ENCODE measurements at regions of chr3 and their contacts with region 1.

Region 1: GRCh38 chr3:188881954-188882641 is 289.7 kb upstream of the TPRG1 start:
- DNase-seq: peak; percentile 70
- H3K4me3 ChIP-seq: no peak overlapping the region
- H3K27ac ChIP-seq: peak overlapping the region; percentile 74
- H3K4me1 ChIP-seq: peaks cover 37% of the 10 kb centered on the region
- H3K27me3 ChIP-seq: no peaks in the 10 kb centered on the region
- CTCF ChIP-seq: no peak
- POLR2A ChIP-seq: no peak

Region 2: GRCh38 chr3:188734429-188734861 is 147.7 kb before region 1 on chr3:
- CTCF ChIA-PET with region 1: no interaction called
- POLR2A ChIA-PET with region 1: no interaction called
- dilution Hi-C with region 1: no loop called
- intact Hi-C with region 1: no loop called
- DNase-seq: peak; percentile 25
- H3K4me3 ChIP-seq: no peak overlapping the region
- H3K27ac ChIP-seq: no peak overlapping the region
- H3K4me1 ChIP-seq: no peaks in the 10 kb centered on the region
- H3K27me3 ChIP-seq: no peaks in the 10 kb centered on the region
- CTCF ChIP-seq: no peak
- POLR2A ChIP-seq: no peak

Region 3: GRCh38 chr3:188788621-188789081 is 93.4 kb before region 1 on chr3:
- CTCF ChIA-PET with region 1: no interaction called
- POLR2A ChIA-PET with region 1: no interaction called
- dilution Hi-C with region 1: no loop called
- intact Hi-C with region 1: loop called (anchors 5 kb)
- DNase-seq: peak; percentile 90
- H3K4me3 ChIP-seq: no peak overlapping the region
- H3K27ac ChIP-seq: peak overlapping the region; percentile 85
- H3K4me1 ChIP-seq: peaks cover 19% of the 10 kb centered on the region
- H3K27me3 ChIP-seq: no peaks in the 10 kb centered on the region
- CTCF ChIP-seq: no peak
- POLR2A ChIP-seq: no peak

Region 4: DNA sequence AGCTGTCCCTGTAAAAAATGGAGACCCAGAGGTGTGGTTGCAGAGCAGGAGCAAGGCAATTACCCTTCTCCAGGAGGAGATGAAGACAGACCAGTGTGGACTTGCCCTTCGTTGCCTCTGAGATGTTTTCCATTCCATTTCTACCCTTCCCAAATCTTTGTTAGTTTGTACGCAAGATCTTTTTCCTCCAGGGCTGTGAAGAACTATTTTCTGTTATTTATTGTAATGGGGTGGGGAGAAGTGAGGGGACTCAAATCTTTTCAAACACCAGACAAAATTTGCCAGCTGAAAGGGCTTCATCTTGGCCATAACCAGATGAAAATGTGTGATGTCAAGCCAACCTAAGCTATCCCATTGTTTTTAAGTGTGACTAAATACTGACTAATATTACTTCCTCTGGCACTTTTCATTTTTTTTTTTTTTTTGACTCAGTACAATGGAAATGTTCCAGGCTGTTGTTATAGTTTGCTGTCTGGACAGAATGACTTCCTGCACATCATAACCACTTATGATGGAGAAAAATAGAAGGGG is 18.4 kb after region 1 on chr3:
- CTCF ChIA-PET with region 1: interaction called, 3 read pairs
- POLR2A ChIA-PET with region 1: interaction called, 3 read pairs
- dilution Hi-C with region 1: no loop called
- intact Hi-C with region 1: loop called (anchors 1 kb)
- DNase-seq: peak; percentile 94
- H3K4me3 ChIP-seq: peak overlapping the region in 1 of 3 experiments; percentile 35
- H3K27ac ChIP-seq: peak overlapping the region; percentile 100
- H3K4me1 ChIP-seq: peaks cover 37% of the 10 kb centered on the region
- H3K27me3 ChIP-seq: no peaks in the 10 kb centered on the region
- CTCF ChIP-seq: no peak
- POLR2A ChIP-seq: no peak

Region 5: DNA sequence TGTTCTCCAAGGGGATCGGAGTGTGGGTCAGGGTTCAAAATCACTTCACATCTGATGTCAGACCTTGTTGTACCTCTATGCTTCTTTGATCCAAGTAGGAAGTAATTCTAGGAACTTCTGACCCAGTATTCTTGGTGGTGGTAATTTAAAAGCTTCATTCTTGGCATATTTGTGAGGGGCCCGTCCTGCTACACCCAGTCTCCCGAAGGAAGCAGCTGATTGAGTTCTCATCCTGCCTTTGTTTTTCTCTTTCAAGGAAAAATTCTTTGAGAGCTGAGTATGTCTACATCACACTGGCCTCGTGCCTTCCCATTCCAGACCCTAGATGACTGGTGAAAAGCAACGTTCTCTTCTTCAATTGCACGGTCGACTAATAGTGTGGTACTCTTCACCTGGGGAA is 55.3 kb after region 1 on chr3:
- CTCF ChIA-PET with region 1: interaction called, 4 read pairs
- POLR2A ChIA-PET with region 1: no interaction called
- dilution Hi-C with region 1: no loop called
- intact Hi-C with region 1: loop called (anchors 1 kb)
- DNase-seq: peak; percentile 90
- H3K4me3 ChIP-seq: no peak overlapping the region
- H3K27ac ChIP-seq: no peak overlapping the region
- H3K4me1 ChIP-seq: peaks cover 18% of the 10 kb centered on the region
- H3K27me3 ChIP-seq: no peaks in the 10 kb centered on the region
- CTCF ChIP-seq: no peak
- POLR2A ChIP-seq: no peak

Region 6: DNA sequence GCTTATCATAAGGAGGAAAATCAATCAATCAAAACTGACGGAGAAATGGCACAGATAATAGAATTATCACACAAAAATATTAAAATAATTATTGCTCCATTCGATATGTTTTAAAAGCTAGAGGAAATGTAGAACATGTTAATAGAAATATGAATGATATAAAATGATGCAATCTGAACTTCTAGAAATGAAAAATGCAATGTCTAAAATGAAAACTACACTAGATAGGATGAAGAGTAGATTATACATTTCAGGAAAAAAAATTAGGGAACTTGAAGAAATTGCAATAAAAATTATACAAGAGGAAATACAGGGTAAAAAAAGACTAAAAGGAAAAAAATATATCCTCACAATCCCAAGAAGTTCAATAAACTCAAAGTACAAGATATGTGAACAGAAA is 668.9 kb after region 1 on chr3:
- CTCF ChIA-PET with region 1: no interaction called
- POLR2A ChIA-PET with region 1: no interaction called
- dilution Hi-C with region 1: no loop called
- intact Hi-C with region 1: no loop called
- DNase-seq: no peak
- H3K4me3 ChIP-seq: no peak overlapping the region
- H3K27ac ChIP-seq: no peak overlapping the region
- H3K4me1 ChIP-seq: no peaks in the 10 kb centered on the region
- H3K27me3 ChIP-seq: no peaks in the 10 kb centered on the region
- CTCF ChIP-seq: no peak
- POLR2A ChIP-seq: no peak